ENCODE measurements at regions of chr3 and their contacts with region 1.

Region 1: GRCh38 chr3:89619263-89619662 is 511.8 kb downstream of the EPHA3 start:
- DNase-seq: no peak
- ATAC-seq: no peak
- H3K4me3 ChIP-seq: no peak overlapping the region
- H3K27ac ChIP-seq: no peak overlapping the region
- H3K4me1 ChIP-seq: no peaks in the 10 kb centered on the region
- H3K27me3 ChIP-seq: no peaks in the 10 kb centered on the region
- CTCF ChIP-seq: no peak

Region 2: GRCh38 chr3:89649431-89649830 is 30.2 kb after region 1 on chr3:
- CTCF ChIA-PET with region 1: no interaction called
- POLR2A ChIA-PET with region 1: no interaction called
- in situ Hi-C with region 1: no loop called
- intact Hi-C with region 1: no loop called
- DNase-seq: no peak
- ATAC-seq: no peak
- H3K4me3 ChIP-seq: no peak overlapping the region
- H3K27ac ChIP-seq: no peak overlapping the region
- H3K4me1 ChIP-seq: no peaks in the 10 kb centered on the region
- H3K27me3 ChIP-seq: no peaks in the 10 kb centered on the region
- CTCF ChIP-seq: no peak

Region 3: GRCh38 chr3:89714237-89714636 is 95.0 kb after region 1 on chr3:
- CTCF ChIA-PET with region 1: no interaction called
- POLR2A ChIA-PET with region 1: interaction called, 17 read pairs
- in situ Hi-C with region 1: no loop called
- intact Hi-C with region 1: no loop called
- DNase-seq: no peak
- ATAC-seq: no peak
- H3K4me3 ChIP-seq: no peak overlapping the region
- H3K27ac ChIP-seq: no peak overlapping the region
- H3K4me1 ChIP-seq: no peaks in the 10 kb centered on the region
- H3K27me3 ChIP-seq: no peaks in the 10 kb centered on the region
- CTCF ChIP-seq: no peak